AG04449 (cell line): ENCODE measurements at regions of chr4 and their contacts with region 1.

Region 1: DNA sequence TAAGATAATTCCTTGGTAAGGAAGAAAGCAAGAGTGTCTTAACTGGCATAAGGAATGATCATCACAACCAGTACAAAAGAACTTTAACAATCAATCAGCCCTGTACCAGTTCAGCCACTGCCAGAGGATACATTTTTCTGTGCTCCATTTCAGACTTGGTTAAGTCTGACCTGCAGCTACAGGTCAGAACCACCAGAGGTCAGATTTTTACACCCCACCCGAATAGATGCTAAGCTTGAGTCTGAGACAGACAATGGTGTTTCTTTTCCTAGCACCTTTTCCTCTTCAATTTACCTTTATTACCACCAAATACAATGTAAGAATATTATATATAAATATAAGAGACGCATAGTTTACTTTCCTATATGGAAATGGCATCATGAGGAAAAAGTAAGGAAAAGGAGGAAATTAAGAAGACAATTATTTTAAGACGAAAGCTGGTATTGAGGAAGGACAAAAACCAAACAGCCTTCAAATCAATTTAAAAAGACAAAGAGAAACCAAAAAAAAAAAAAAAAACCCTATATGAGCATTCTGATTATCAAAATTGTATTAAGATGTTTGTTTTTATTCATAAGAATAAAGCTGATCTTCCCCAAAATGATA is 215.3 kb upstream of the TTC29 start:
- DNase-seq: peak; percentile 19
- H3K4me3 ChIP-seq: no peak overlapping the region
- CTCF ChIP-seq: peak; percentile 76

Region 2: DNA sequence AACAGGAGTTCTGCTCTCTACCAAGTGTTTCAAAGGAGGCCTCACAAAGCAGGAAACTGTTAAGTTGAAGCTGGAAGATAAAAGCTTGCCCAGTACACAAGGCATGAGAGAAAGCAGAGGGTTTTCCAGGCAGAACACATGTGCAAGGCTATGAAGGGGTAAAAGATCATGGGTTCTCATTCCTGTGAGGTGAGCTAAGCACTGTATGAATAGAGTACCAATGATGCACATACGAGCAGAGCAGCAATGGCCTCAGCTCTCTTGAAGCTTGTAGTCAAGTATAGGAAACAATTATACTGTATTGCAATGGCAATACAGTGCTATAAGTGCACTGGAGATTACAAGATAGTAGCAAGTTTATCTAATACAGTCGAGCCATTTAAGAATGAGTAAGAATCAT is 233.3 kb before region 1 on chr4:
- CTCF ChIA-PET with region 1: no interaction called
- POLR2A ChIA-PET with region 1: no interaction called
- DNase-seq: no peak
- H3K4me3 ChIP-seq: no peak overlapping the region
- CTCF ChIP-seq: no peak

Region 3: GRCh38 chr4:147173322-147173721 is 12.3 kb after region 1 on chr4:
- CTCF ChIA-PET with region 1: interaction called, 28 read pairs
- POLR2A ChIA-PET with region 1: no interaction called
- DNase-seq: no peak
- H3K4me3 ChIP-seq: no peak overlapping the region
- CTCF ChIP-seq: no peak

Region 4: DNA sequence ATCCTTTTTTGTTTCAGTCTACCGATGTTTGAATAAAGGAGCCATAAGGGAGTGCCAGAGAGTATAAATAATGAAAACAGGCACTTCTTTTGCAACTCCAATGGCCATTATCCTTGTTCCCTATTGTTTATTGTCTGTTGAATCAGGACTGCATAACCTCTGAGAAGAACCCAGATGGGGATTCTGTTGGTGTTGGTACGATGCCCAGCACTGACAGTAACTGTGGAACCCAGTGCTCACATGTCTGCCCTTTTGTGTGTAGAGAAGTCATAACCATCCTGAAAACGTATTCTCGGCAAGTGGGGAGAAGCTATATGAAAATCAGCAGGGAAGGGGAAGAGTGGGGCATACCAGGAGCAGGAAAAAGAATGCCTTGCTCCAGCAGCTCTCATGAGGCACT is 124.7 kb after region 1 on chr4:
- CTCF ChIA-PET with region 1: no interaction called
- POLR2A ChIA-PET with region 1: no interaction called
- DNase-seq: peak; percentile 17
- H3K4me3 ChIP-seq: no peak overlapping the region
- CTCF ChIP-seq: no peak

Region 5: GRCh38 chr4:147480891-147481576 is 320.0 kb after region 1 on chr4 and contains the start of gene EDNRA:
- CTCF ChIA-PET with region 1: interaction called, 11 read pairs
- POLR2A ChIA-PET with region 1: interaction called, 3 read pairs
- DNase-seq: no peak
- H3K4me3 ChIP-seq: peak within 1 kb of the TSS; percentile 71
- CTCF ChIP-seq: no peak

Region 6: DNA sequence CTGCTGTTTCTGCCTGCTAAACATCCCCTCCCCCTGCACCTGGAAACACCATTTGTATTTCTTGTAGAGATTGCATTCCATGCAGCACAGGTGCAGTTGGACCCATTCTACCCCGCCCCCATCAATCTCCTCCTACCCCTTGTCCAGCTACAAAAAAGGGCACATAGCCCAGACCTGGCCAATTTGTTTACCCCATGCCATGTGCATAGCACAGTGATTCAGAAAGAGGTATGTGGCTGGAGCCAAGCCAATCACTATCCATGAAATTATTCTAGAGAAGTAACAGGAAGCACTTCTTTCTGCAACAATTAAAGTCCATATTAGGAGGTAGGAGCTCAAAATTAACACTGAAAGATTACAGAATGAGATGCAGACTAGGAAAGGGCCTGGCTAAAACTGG is 436.0 kb after region 1 on chr4:
- CTCF ChIA-PET with region 1: interaction called, 14 read pairs
- POLR2A ChIA-PET with region 1: no interaction called
- DNase-seq: no peak
- H3K4me3 ChIP-seq: no peak overlapping the region
- CTCF ChIP-seq: no peak